Transverse colon (tissue), 4 donors: ENCODE measurements at regions of chr1 and their contacts with region 1.

Region 1: DNA sequence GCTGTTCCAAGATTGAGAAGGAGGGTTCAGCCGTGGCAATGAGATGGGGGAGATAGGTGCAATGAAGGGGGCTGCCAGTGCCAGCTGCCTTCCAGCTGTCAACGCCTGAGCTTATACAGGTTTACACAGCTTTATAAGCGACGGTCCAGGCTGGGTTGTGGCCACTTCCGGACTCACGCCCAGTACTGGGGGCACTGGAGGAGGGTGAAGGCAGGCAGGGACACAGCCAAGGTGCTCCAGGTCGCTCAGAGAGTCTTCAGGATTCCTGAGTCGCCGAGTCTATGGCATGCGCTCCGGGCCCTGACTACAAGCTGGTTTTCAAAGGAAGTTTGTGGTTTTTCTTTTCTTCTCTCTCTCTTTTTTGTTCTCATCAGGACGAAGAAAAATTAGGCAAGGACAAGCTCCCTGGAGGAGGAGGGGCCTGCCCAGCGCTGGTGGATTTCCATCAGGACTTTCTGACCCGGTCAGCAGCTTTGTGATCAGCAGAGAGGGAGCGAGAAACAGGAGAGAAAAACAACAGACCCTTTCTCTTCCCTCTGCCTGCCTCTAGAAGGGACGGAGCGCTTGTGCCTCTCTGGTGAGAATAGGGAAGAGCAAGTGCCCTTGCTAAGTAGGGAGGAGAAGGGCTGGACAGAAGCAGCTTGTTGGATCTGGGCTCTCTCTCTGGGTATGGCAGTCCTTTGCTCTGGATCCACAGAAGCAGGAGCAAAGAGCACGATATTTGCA is at the start of gene MINDY1:
- DNase-seq: peak; percentile 81
- H3K4me3 ChIP-seq: peak within 1 kb of the TSS; percentile 41 to 86 (median 58)
- H3K27ac ChIP-seq: peak within 1 kb of the TSS; percentile 89 to 96 (median 92)
- H3K4me1 ChIP-seq: peaks cover 39 to 75% (median 48%) of the 10 kb centered on the region in 4 donors
- H3K27me3 ChIP-seq: no peaks in the 10 kb centered on the region
- CTCF ChIP-seq: peak; percentile 46 to 72 (median 53)
- EP300 ChIP-seq: no peak
- POLR2A ChIP-seq: peak; percentile 91
- total RNA-seq, gene MINDY1: 27.7 to 66.2 (median 54.8) TPM

Region 2: DNA sequence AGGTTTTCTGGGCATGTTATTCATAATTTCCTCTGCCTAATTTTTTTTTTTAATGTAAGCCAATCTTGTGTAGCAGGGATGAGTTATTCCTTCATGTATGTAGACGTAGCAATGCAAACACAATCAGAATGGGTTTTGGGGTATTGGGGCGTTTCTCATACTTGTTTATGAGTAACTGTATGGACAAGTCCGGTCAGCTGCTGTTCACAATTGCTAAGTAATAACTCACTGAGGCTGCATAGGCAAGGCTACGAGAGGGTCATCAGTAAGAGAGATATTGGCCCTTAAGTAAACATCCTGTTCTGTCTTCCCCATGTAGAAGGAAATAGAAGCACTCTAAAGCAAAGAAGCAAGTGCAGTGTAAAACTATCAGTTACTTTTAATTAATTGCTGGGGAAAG is 528.8 kb before region 1 on chr1:
- in situ Hi-C with region 1: no loop called
- intact Hi-C with region 1: no loop called
- DNase-seq: no peak
- H3K4me3 ChIP-seq: no peak overlapping the region
- H3K27ac ChIP-seq: no peak overlapping the region
- H3K4me1 ChIP-seq: peaks cover 0 to 13% (median 9%) of the 10 kb centered on the region in 4 donors
- H3K27me3 ChIP-seq: no peaks in the 10 kb centered on the region
- CTCF ChIP-seq: no peak
- EP300 ChIP-seq: no peak
- POLR2A ChIP-seq: no peak

Region 3: GRCh38 chr1:150863724-150864123 is 142.8 kb before region 1 on chr1:
- in situ Hi-C with region 1: no loop called
- intact Hi-C with region 1: no loop called
- DNase-seq: no peak
- H3K4me3 ChIP-seq: no peak overlapping the region
- H3K27ac ChIP-seq: no peak overlapping the region
- H3K4me1 ChIP-seq: no peaks in the 10 kb centered on the region
- H3K27me3 ChIP-seq: no peaks in the 10 kb centered on the region
- CTCF ChIP-seq: no peak
- EP300 ChIP-seq: no peak
- POLR2A ChIP-seq: no peak

Region 4: GRCh38 chr1:151070474-151071276 is 64.2 kb after region 1 on chr1 and contains the start of gene GABPB2:
- in situ Hi-C with region 1: no loop called
- intact Hi-C with region 1: loop called (anchors 2 kb)
- DNase-seq: peak; percentile 92
- H3K4me3 ChIP-seq: peak within 1 kb of the TSS; percentile 71 to 95 (median 84)
- H3K27ac ChIP-seq: peak within 1 kb of the TSS; percentile 92 to 100 (median 98)
- H3K4me1 ChIP-seq: peaks cover 2 to 16% (median 7%) of the 10 kb centered on the region in 4 donors
- H3K27me3 ChIP-seq: no peaks in the 10 kb centered on the region
- CTCF ChIP-seq: peak; percentile 89 to 95 (median 93)
- EP300 ChIP-seq: no peak
- POLR2A ChIP-seq: peak; percentile 64
- total RNA-seq, gene GABPB2: 9.6 to 19.8 (median 10.2) TPM